ENCODE measurements at regions of chr6 and their contacts with region 1.

Region 1: DNA sequence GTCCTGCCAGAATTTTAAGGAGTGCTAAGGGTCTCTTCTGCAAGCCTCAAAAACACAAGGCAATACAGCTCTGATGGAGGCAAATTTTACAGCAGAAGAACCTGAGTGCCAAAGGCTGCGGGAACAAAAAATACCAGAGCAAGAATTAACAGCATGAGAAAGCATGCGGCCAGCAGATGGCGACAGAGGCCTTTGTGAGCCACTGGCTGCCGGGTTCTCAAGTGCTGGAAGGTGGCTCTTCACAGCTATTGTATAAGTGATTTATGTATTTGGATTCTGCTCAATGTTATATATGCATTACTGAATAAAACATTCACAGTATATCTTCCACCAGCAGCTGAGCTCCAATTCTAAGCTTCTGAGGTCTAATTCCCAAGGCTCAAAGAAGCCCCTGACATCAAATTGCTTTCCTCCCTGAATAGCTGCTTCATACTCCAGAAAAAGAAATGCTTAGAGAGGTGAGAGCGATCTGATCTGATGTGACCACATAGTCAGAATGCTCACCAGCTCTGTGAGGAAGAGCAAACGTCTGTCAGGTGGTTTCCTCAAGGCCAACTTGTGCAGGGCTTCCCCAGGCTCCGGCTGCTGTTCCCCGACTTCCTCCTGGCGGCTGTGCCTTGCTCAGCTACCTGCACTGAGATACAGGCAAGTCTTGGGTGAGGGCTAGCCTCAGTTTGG is 58.6 kb downstream of the PPP1R3G start:
- DNase-seq: peak; percentile 63
- H3K4me3 ChIP-seq: no peak overlapping the region
- H3K27ac ChIP-seq: no peak overlapping the region
- H3K27me3 ChIP-seq: no peaks in the 10 kb centered on the region
- CTCF ChIP-seq: peak; percentile 94

Region 2: GRCh38 chr6:5159148-5159547 is 15.4 kb after region 1 on chr6:
- CTCF ChIA-PET with region 1: interaction called, 30 read pairs
- POLR2A ChIA-PET with region 1: no interaction called
- DNase-seq: no peak
- H3K4me3 ChIP-seq: no peak overlapping the region
- H3K27ac ChIP-seq: no peak overlapping the region
- H3K27me3 ChIP-seq: no peaks in the 10 kb centered on the region
- CTCF ChIP-seq: no peak

Region 3: GRCh38 chr6:5205877-5206850 is 62.4 kb after region 1 on chr6:
- CTCF ChIA-PET with region 1: interaction called, 10 read pairs
- POLR2A ChIA-PET with region 1: no interaction called
- DNase-seq: no peak
- H3K4me3 ChIP-seq: no peak overlapping the region
- H3K27ac ChIP-seq: no peak overlapping the region
- H3K27me3 ChIP-seq: no peaks in the 10 kb centered on the region
- CTCF ChIP-seq: no peak

Region 4: DNA sequence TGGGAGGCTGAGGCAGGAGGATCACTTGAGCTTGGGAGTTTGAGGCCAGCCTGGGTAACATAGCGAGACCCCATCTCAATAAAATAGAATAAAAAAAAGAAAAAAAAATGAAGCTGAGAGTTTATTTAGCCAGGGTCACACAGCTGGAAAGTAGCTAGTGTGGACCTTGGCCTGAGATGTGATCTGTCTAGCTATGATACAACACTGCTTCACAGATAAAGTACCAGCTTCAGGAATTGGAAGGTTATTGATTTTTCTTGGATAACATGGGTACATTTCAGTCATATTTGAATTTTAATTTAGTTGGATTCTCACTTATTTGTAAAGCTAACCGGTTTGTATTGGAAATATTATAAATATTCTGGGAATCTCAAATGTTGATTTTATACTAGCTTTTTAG is 122.7 kb after region 1 on chr6:
- CTCF ChIA-PET with region 1: interaction called, 14 read pairs
- POLR2A ChIA-PET with region 1: interaction called, 8 read pairs
- DNase-seq: no peak
- H3K4me3 ChIP-seq: no peak overlapping the region
- H3K27ac ChIP-seq: no peak overlapping the region
- H3K27me3 ChIP-seq: no peaks in the 10 kb centered on the region
- CTCF ChIP-seq: no peak

Region 5: DNA sequence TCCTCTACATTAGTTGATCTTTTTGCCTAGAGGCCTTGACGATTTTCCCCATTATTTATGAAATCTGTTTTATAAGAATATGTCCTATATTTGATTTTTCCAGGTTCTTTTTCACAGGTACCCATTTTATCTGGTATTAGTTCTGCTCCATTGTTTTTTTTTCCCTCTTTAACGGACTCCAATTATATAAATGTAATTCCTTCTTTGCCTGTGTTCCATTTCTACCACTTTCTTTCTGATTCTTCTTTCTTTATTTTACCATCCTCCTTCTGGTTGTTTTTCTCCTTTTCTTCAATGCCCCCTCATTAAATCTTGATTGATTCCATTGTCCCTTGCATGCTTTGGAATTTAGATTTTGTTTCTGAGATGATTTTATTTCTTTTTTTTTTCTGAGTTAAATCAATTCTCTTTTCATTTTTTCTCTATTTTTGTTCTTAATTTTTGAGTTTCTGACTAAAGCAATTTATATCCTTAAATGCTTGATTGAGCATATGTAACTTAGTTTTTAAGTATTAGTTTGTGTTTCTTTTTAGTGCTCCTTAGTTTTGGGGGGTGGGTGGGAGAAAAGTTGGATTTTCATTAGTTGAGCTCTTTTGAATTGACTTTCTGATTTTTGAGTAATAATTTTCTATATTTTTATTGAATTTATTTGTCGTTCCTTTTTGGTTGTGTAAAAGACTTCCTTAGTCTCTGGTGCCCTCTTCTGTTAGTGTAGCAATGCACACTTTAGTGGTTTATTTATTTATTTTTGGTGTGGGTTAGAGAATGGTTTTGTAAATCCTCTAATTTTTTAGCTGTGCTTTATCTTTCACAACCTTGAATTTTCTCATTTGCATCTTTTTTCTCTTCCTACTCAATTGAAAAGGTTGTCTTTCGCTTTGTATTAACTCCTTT is 258.3 kb after region 1 on chr6:
- CTCF ChIA-PET with region 1: interaction called, 69 read pairs
- POLR2A ChIA-PET with region 1: no interaction called
- DNase-seq: no peak
- H3K4me3 ChIP-seq: no peak overlapping the region
- H3K27ac ChIP-seq: no peak overlapping the region
- H3K27me3 ChIP-seq: no peaks in the 10 kb centered on the region
- CTCF ChIP-seq: peak; percentile 63

Measured in AG04450 (cell line).